ENCODE measurements at regions of chr1 and their contacts with region 1.

Region 1: DNA sequence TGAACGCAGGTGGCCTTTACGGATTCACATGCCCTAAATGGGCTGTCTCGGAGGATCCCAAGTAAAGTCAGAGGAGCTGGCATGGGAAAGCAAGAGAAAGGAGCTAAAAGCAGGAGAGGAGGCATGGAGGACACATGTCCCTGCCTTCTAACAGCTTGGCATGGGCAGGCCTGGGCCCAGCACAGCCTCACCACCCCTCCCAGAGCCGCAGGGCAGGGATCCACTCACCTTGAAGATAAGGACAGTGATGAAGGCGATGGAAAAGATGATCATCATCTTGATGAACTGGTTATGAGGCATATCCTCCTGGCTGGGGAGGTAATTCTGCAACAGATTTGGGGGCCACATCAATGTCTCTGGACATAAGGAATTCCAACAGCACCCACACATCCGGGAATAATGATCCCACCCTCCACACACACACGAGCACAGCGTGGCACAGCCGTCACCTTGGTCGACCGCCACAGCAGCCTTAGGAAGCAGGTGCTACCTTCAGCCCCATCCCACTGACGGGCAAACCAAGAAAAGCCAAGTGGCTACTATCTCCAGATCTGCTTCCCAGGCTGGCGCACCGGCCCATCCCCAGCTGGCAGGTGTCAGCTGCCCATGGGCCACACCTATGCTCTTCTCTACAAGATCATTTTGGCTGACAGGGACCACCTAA is 14.1 kb upstream of the MATN1 start:
- DNase-seq: no peak
- ATAC-seq: no peak
- H3K4me3 ChIP-seq: no peak overlapping the region
- H3K4me3 Mint-ChIP-seq: no peak overlapping the region
- H3K27ac ChIP-seq: no peak overlapping the region
- H3K27ac Mint-ChIP-seq: peak overlapping the region; percentile 80 to 90
- H3K4me1 ChIP-seq: peaks cover 22 to 54% of the 10 kb centered on the region in 2 experiments
- H3K4me1 Mint-ChIP-seq: peaks cover 42 to 59% (median 58%) of the 10 kb centered on the region in 3 donors
- H3K27me3 ChIP-seq: no peaks in the 10 kb centered on the region
- H3K27me3 Mint-ChIP-seq: no peaks in the 10 kb centered on the region

Region 2: DNA sequence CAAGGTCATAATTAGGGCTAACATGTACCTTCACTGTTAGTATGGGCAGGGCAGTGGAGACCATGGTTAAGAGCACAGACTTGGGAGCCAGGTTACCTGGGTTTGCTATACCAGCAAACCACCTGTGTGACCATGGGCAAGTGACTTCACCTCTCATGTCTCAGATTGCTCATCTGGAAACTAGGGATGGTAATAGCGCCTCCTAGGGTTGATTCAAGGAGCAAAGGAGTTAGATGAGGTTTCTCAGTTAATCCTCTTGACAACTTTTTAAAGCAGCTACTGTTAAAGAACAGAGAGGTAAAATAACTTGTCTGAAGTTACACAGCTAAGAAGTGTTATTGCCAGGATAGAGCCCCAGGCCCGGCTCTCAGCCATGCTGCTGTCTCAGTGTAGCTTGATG is 13.3 kb before region 1 on chr1:
- CTCF ChIA-PET with region 1: interaction called, 3 to 10 read pairs
- POLR2A ChIA-PET with region 1: no interaction called
- DNase-seq: no peak
- ATAC-seq: no peak
- H3K4me3 ChIP-seq: no peak overlapping the region
- H3K4me3 Mint-ChIP-seq: no peak overlapping the region
- H3K27ac ChIP-seq: no peak overlapping the region
- H3K27ac Mint-ChIP-seq: peak overlapping the region; percentile 31 to 62
- H3K4me1 ChIP-seq: peaks cover 0 to 38% of the 10 kb centered on the region in 2 experiments
- H3K4me1 Mint-ChIP-seq: peaks cover 27 to 53% (median 41%) of the 10 kb centered on the region in 3 donors
- H3K27me3 ChIP-seq: no peaks in the 10 kb centered on the region
- H3K27me3 Mint-ChIP-seq: no peaks in the 10 kb centered on the region